CD14-positive monocyte (primary cell): ENCODE measurements at regions of chr16 and their contacts with region 1.

Region 1: DNA sequence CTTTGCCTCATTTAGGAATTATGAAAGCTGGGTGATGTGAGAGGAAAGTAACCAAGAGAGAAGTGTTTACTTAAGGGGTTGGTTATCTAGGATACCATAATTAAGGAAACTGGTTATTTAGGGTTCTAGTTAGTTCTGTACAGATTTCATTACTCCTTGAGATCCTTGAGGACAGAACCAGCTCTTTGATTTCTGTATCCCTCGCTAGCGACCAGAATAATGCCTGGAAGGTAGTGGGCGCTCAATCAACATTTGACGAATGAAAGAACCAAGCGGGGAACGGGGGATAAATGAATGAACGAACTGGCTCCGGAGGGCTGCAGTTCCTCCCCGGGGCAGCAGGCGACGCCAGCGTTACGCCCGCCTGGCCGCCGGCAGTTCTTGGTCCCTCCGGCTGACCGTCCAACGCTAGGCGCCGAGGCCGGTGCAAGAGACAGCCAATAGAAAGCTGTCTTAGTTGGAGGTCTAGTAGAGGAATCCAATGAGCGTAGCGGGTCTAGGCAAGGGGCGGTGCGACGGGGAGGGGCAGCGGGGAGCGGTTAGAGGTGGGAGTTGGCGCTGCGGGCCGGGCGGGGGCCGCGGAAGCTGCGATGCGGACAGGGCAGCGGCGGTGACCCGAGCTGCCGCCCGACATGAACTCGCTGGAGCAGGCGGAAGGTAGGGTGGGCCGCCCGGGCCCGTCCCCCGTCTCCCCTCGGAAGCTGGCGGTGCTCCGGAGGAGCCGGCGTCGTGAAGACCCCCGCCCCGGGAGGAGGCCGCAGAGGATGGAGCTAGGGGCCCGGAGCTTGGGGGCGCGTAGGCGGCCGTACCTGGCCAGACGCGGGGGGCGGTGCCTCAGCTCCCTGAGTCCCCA is at the start of gene CNEP1R1:
- DNase-seq: peak; percentile 96 to 97 (median 96)
- H3K4me3 ChIP-seq: peak within 1 kb of the TSS; percentile 65 to 95 (median 92)
- H3K4me3 Mint-ChIP-seq: peak within 1 kb of the TSS; percentile 94 to 98
- H3K27ac ChIP-seq: peak within 1 kb of the TSS; percentile 43 to 87
- H3K27ac Mint-ChIP-seq: peak within 1 kb of the TSS; percentile 81 to 94 (median 91)
- H3K4me1 ChIP-seq: peaks cover 12 to 24% of the 10 kb centered on the region in 2 donors
- H3K4me1 Mint-ChIP-seq: peaks cover 31% of the 10 kb centered on the region
- H3K27me3 ChIP-seq: no peaks in the 10 kb centered on the region
- H3K27me3 Mint-ChIP-seq: peaks cover 0 to 5% (median 0%) of the 10 kb centered on the region in 3 donors
- CTCF ChIP-seq: peak; percentile 99
- polyA plus RNA-seq, gene CNEP1R1: 13.7 to 49.6 (median 19.3) TPM

Region 2: DNA sequence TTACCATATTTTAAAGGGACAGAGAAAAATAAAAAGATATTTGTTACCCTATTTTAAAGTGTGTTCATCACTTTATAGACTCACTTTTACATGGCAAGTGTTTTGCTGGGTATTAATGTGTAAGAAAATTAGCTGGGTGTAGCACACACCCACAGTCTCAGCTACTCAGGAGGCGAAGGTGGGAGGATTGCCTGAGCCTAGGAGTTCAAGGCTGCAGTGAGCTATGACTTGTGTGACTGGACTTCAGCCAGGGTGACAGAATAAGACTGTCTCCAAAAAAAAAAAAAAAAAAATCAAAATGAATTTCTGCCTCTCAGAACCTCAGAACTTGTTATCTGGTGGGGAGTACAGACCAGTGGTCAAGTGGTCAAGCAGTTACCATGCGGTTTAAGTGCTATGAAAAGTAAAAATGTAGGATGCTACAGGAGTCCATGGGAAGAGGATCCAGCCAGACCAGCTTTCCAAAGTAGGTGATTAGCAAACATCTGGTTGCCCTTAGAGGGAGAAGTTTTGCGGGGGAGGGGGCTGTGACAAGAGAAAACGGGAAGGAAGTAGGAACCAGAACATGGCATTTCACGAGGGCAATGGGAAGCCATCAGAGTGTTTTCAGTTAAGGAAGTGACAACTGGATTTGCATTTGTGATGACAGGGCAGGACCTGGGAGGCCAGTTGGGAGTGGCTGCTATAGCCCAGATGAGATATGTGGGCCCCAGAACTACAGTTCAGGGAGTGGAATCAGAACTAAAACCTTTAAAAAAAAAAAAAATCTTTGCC is 14.0 kb after region 1 on chr16:
- intact Hi-C with region 1: loop called in 1 of 2 experiments (anchors 1 kb)
- DNase-seq: peak; percentile 90 to 95 (median 92)
- H3K4me3 ChIP-seq: peak overlapping the region in 1 of 3 experiments; percentile 62
- H3K4me3 Mint-ChIP-seq: peak overlapping the region; percentile 32 to 77
- H3K27ac ChIP-seq: peak overlapping the region; percentile 78 to 81
- H3K27ac Mint-ChIP-seq: peak overlapping the region; percentile 93 to 99 (median 97)
- H3K4me1 ChIP-seq: peaks cover 44 to 48% of the 10 kb centered on the region in 2 donors
- H3K4me1 Mint-ChIP-seq: peaks cover 44% of the 10 kb centered on the region
- H3K27me3 ChIP-seq: no peaks in the 10 kb centered on the region
- H3K27me3 Mint-ChIP-seq: peaks cover 0 to 2% (median 0%) of the 10 kb centered on the region in 3 donors
- CTCF ChIP-seq: no peak

Region 3: DNA sequence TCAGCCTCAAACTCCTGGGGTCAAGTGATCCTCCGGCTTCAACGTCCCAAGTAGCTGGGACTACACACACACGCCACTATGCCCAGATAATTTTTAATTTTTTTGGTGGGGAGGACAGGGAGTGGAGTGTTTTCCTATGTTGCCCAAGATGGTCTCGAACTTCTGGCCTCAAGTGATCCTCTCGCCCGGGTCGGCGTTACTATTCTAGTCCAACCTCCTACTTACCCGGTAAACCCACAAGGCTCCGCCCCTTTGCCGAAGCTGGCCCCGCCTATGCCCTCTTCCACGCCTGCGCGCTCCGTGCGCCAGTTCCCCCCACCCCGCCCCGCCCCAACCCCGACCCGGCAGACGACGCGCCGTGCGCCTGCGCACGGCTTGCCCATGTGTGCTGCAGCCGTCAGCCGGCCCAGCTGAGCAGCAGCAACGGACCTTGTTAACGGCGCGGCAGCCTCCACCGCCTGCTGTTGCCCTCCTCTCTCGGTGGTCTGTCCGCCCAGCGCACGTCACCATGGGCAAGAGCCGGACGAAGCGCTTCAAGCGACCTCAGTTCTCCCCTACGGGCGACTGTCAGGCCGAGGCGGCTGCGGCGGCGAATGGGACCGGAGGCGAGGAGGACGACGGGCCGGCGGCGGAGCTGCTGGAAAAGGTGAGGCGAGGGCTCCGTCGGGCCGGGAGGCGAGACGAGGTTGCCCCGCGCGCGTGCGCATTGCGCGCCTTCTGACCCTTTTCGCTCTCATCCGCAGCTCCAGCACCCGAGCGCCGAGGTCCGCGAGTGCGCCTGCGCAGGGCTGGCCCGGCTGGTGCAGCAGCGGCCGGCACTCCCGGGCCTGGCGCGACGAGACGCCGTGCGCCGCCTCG is 40.9 kb after region 1 on chr16 and contains the start of gene HEATR3:
- intact Hi-C with region 1: loop called (anchors 2 to 5 kb)
- DNase-seq: peak; percentile 89 to 96 (median 91)
- H3K4me3 ChIP-seq: peak within 1 kb of the TSS; percentile 51 to 96 (median 93)
- H3K4me3 Mint-ChIP-seq: peak within 1 kb of the TSS; percentile 92 to 94
- H3K27ac ChIP-seq: peak within 1 kb of the TSS; percentile 66 to 87
- H3K27ac Mint-ChIP-seq: peak within 1 kb of the TSS; percentile 89 to 97 (median 95)
- H3K4me1 ChIP-seq: peaks cover 26% of the 10 kb centered on the region in 2 donors
- H3K4me1 Mint-ChIP-seq: peaks cover 35% of the 10 kb centered on the region
- H3K27me3 ChIP-seq: no peaks in the 10 kb centered on the region
- H3K27me3 Mint-ChIP-seq: peaks cover 0 to 2% (median 1%) of the 10 kb centered on the region in 3 donors
- CTCF ChIP-seq: no peak
- polyA plus RNA-seq, gene HEATR3: 10.4 to 40.6 (median 10.7) TPM